ENCODE measurements at regions of chr9 and their contacts with region 1.

Region 1: DNA sequence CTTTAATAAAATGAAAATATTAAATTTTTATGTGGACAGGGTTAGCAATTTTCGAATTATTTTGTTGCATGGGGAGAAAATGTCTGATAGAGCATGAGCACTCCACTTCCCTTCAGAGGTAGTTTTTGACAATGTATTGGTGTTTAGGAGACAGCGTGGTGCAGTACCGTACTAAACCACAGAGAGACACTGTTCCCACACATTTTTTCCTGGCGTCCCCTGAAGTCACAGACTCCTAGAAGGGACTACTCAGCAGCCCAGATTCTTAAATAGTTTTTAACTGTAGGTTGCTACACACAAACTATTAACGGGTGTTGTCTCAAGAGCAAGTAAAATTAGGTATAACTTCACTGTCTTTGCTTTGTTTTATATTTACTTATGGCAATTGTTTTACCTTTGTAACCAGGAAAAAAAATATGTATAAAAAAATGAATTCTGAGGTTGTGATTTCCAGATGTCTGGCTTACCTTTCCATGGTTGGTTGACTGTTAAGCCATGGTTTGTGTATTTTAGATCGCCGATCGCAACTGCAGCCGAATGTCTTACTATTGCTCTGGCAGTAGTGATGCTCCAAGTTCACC is 171.2 kb downstream of the DOCK8 start:
- DNase-seq: peak in 3 of 6 donors; percentile 24 to 79 (median 28)
- ATAC-seq: peak; percentile 90 to 98 (median 96)
- H3K4me3 ChIP-seq: no peak overlapping the region
- H3K27ac ChIP-seq: no peak overlapping the region
- H3K4me1 ChIP-seq: no peaks in the 10 kb centered on the region
- H3K27me3 ChIP-seq: no peaks in the 10 kb centered on the region
- CTCF ChIP-seq: peak; percentile 83 to 86 (median 83)

Region 2: GRCh38 chr9:530681-531080 is 144.8 kb after region 1 on chr9:
- intact Hi-C with region 1: no loop called
- DNase-seq: peak in 2 of 6 donors; percentile 44 to 57
- ATAC-seq: peak; percentile 51 to 74 (median 60)
- H3K4me3 ChIP-seq: no peak overlapping the region
- H3K27ac ChIP-seq: no peak overlapping the region
- H3K4me1 ChIP-seq: peaks cover 11 to 38% (median 33%) of the 10 kb centered on the region in 3 donors
- H3K27me3 ChIP-seq: no peaks in the 10 kb centered on the region
- CTCF ChIP-seq: no peak

Region 3: GRCh38 chr9:792282-793260 is 406.7 kb after region 1 on chr9:
- intact Hi-C with region 1: no loop called
- DNase-seq: no peak
- ATAC-seq: no peak
- H3K4me3 ChIP-seq: no peak overlapping the region
- H3K27ac ChIP-seq: no peak overlapping the region
- H3K4me1 ChIP-seq: no peaks in the 10 kb centered on the region
- H3K27me3 ChIP-seq: no peaks in the 10 kb centered on the region
- CTCF ChIP-seq: no peak

Region 4: DNA sequence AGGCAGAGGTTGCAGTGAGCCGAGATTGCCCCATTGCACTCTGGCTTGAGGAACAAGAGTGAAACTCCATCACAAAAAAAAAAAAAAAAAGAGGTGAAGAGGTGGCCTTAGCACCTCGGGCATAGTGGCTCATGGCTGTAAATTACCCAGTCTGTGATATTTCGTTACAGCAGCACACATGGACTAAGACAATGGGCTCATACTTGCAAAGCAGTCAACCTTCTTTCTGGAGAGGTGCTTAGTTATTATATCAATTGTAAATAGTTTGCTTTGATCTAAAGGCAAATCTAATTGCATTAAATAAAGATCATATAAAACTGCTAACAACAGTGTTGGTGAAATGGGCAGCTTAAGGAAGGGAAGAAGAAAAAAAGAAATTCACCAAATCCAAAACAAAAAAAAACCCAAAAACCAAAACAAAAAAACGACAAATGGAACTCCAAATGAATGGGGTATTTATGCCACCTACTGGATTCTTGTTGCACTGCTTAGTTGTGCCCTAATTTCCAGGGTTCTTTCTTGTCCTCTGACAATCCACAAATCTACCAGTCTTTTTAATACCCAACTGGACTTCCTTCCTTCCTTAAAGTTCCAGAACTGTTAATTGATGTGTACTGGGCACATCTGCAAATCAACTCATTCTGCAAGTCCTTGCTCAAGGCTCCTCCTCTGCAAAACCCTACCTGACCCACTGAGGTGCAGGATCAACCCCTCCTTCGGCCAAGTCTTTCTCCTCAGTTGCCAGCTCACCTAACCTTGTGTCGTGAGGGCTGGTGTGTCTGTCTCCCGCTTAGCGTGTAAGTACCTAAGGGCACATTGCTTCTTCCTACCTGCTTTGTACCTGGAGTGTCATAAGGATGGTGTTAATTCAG is 420.6 kb after region 1 on chr9:
- intact Hi-C with region 1: loop called in 1 of 3 experiments (anchors 10 kb)
- DNase-seq: no peak
- ATAC-seq: peak in 3 of 4 donors; percentile 71 to 77 (median 72)
- H3K4me3 ChIP-seq: no peak overlapping the region
- H3K27ac ChIP-seq: no peak overlapping the region
- H3K4me1 ChIP-seq: no peaks in the 10 kb centered on the region
- H3K27me3 ChIP-seq: no peaks in the 10 kb centered on the region
- CTCF ChIP-seq: peak; percentile 21 to 61 (median 54)

Measured in pancreas (tissue), 10 donors.